ENCODE measurements at regions of chr12 and their contacts with region 1.

Region 1: GRCh38 chr12:41055875-41056577 is 132.1 kb upstream of the PDZRN4 start:
- DNase-seq: no peak
- H3K4me3 ChIP-seq: no peak overlapping the region
- H3K27ac ChIP-seq: peak overlapping the region in 1 of 2 donors; percentile 32
- H3K4me1 ChIP-seq: peaks cover 2% of the 10 kb centered on the region in 2 donors
- H3K27me3 ChIP-seq: no peaks in the 10 kb centered on the region
- CTCF ChIP-seq: no peak

Region 2: DNA sequence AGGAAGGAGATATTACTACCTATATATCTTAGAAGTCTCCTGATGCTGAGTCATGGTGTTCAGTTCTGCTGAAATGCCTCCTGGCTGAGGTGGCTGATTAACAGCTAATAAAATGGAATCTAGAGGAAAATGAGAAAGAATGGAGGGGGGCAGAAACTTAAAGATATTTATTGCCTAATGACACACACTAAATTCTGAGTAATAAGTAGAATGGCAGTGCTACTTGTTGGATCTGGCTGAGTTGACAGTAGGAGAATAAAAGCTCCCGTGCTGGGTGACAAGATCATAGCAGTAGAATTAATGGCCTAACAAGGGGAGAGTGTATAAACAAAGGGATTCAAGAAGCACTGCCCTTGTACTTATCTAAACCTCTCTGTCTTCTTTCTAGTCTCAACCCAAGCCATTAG is 226.3 kb before region 1 on chr12:
- intact Hi-C with region 1: no loop called
- DNase-seq: no peak
- H3K4me3 ChIP-seq: no peak overlapping the region
- H3K27ac ChIP-seq: no peak overlapping the region
- H3K4me1 ChIP-seq: no peaks in the 10 kb centered on the region
- H3K27me3 ChIP-seq: no peaks in the 10 kb centered on the region
- CTCF ChIP-seq: no peak

Region 3: DNA sequence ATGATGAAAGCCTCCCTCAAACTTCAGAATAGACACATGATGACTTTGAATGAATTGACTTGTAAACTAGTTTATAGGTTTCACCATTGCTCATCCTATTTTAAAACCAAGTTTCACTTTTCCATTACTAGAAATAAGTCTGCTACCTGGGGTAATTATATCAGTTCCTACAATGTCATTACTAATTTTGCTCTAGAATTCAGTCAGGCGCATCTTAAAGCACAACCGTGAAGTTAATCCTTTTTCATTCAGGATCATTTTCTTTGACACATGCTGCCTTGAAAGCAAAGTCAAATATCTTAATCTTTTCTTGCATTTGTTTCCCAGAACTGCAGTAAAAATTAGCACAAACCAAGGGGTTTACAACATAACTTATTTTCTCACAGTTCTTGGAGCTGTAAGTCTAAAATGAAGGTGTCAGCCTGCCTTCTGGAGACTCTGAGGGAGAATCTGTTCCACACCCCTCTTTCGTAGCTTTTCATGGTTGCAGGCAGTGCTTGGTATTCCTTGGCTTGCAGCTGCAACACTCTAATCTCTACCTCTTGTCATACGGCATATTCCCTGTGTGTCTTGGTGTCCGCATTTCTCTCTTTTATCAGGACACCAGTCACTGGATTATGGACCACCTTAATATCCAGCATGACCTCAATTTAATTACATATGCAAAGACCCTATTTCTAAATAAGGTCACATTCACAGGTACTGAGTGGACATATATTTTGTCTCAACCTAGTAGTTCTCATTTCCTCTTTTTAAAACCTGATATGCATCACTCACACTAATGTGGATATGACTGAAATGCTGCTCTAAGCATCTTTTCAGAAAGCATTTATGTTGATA is 17.8 kb after region 1 on chr12:
- intact Hi-C with region 1: loop called (anchors 1 kb)
- DNase-seq: no peak
- H3K4me3 ChIP-seq: no peak overlapping the region
- H3K27ac ChIP-seq: no peak overlapping the region
- H3K4me1 ChIP-seq: no peaks in the 10 kb centered on the region
- H3K27me3 ChIP-seq: no peaks in the 10 kb centered on the region
- CTCF ChIP-seq: no peak